HepG2 (cell line): ENCODE measurements at regions of chr2 and their contacts with region 1.

Region 1: DNA sequence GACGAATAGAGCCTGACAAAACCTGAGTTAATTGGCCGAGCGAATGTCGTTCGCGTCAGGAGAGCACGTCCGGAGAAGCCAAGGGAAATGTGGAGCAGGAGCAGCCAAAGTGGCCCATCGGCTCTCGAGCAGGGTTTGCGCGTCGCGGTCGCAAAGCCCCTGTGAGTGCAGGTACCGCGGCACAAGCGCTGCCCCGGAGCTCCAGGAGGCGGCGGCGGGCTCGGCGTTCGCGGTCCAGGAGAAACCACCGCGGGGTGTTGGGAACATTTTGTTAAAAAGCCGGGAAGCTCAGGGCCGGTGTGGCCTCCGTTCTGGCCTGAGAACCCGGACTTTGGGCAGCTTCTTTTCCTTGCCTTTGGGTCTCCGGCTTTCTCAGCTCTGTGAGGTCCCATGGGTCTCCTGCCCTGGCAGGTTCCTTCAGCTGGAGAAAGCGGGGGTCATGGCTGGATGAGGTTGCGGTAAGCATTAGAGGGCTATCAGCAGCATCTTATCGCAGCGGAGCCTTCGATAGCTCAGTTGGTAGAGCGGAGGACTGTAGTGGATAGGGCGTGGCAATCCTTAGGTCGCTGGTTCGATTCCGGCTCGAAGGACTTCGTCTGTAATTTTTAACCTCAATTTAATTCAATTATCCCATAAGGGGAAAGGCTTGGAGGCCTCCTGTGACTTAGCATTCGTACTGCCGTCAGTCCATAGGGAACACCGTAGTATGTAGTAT is 1.0 kb upstream of the AGBL5 start:
- DNase-seq: peak; percentile 93
- ATAC-seq: peak; percentile 75
- H3K4me3 ChIP-seq: peak overlapping the region; percentile 86 to 97 (median 91)
- H3K27ac ChIP-seq: peak overlapping the region; percentile 81
- H3K4me1 ChIP-seq: peaks cover 24% of the 10 kb centered on the region
- H3K27me3 ChIP-seq: no peaks in the 10 kb centered on the region; a peak in 1 of 5 replicates
- CTCF ChIP-seq: peak; percentile 49
- EP300 ChIP-seq: no peak
- POLR2A ChIP-seq: peak; percentile 86 to 98
- RAD21 ChIP-seq: peak; percentile 48

Region 2: GRCh38 chr2:27032495-27033252 is 17.8 kb before region 1 on chr2 and contains the start of gene TMEM214:
- CTCF ChIA-PET with region 1: no interaction called
- POLR2A ChIA-PET with region 1: interaction called, 59 read pairs
- in situ Hi-C with region 1: no loop called
- intact Hi-C with region 1: loop called (anchors 1 kb)
- DNase-seq: peak; percentile 85
- ATAC-seq: peak; percentile 97
- H3K4me3 ChIP-seq: peak within 1 kb of the TSS; percentile 82 to 97 (median 97)
- H3K27ac ChIP-seq: peak within 1 kb of the TSS; percentile 72
- H3K4me1 ChIP-seq: peaks cover 59% of the 10 kb centered on the region
- H3K27me3 ChIP-seq: no peaks in the 10 kb centered on the region; a peak in 1 of 5 replicates
- CTCF ChIP-seq: peak; percentile 6; the same call in 1 of the 2 replicates
- EP300 ChIP-seq: peak in 1 of 2 experiments; percentile 4; a peak in 1 of 4 replicates
- POLR2A ChIP-seq: peak; percentile 92 to 95
- RAD21 ChIP-seq: peak; percentile 52; the same call in 1 of the 2 replicates
- total RNA-seq, gene TMEM214: 28.0 and 58.3 TPM in 2 replicates

Region 3: GRCh38 chr2:27071277-27071989 is 21.0 kb after region 1 on chr2 and contains the start of gene OST4:
- CTCF ChIA-PET with region 1: no interaction called
- POLR2A ChIA-PET with region 1: interaction called, 100 read pairs
- in situ Hi-C with region 1: no loop called
- intact Hi-C with region 1: loop called (anchors 1 kb)
- DNase-seq: peak; percentile 88
- ATAC-seq: peak; percentile 88
- H3K4me3 ChIP-seq: peak within 1 kb of the TSS; percentile 92 to 99 (median 98)
- H3K27ac ChIP-seq: peak within 1 kb of the TSS; percentile 72
- H3K4me1 ChIP-seq: peaks cover 70% of the 10 kb centered on the region
- H3K27me3 ChIP-seq: peaks cover 0 to 16% of the 10 kb centered on the region in 2 experiments; a peak in 2 of 5 replicates
- CTCF ChIP-seq: peak; percentile 36
- EP300 ChIP-seq: peak in 1 of 2 experiments; percentile 45; a peak in 1 of 4 replicates
- POLR2A ChIP-seq: peak; percentile 93 to 97
- RAD21 ChIP-seq: peak; percentile 52
- total RNA-seq, gene OST4: 498 and 508 TPM in 2 replicates

Region 4: GRCh38 chr2:27078267-27079194 is 28.1 kb after region 1 on chr2 and contains the start of gene EMILIN1:
- CTCF ChIA-PET with region 1: no interaction called
- POLR2A ChIA-PET with region 1: interaction called, 58 read pairs
- in situ Hi-C with region 1: no loop called
- intact Hi-C with region 1: loop called (anchors 2 kb)
- DNase-seq: no peak
- ATAC-seq: peak; percentile 35
- H3K4me3 ChIP-seq: peak within 1 kb of the TSS; percentile 43 to 65 (median 57); a peak in 5 of 6 replicates
- H3K27ac ChIP-seq: peak within 1 kb of the TSS; percentile 32
- H3K4me1 ChIP-seq: peaks cover 85% of the 10 kb centered on the region
- H3K27me3 ChIP-seq: peaks cover 0 to 16% of the 10 kb centered on the region in 2 experiments; a peak in 2 of 5 replicates
- CTCF ChIP-seq: no peak
- EP300 ChIP-seq: no peak
- POLR2A ChIP-seq: no peak
- RAD21 ChIP-seq: no peak
- total RNA-seq, gene EMILIN1: 4.0 and 9.7 TPM in 2 replicates

Region 5: GRCh38 chr2:27211829-27212627 is 161.6 kb after region 1 on chr2 and contains the starts of genes ATRAID and SLC5A6:
- CTCF ChIA-PET with region 1: no interaction called
- POLR2A ChIA-PET with region 1: interaction called, 11 read pairs
- in situ Hi-C with region 1: no loop called
- intact Hi-C with region 1: no loop called
- DNase-seq: peak; percentile 82
- ATAC-seq: peak; percentile 91
- H3K4me3 ChIP-seq: peak within 1 kb of the TSS; percentile 87 to 93 (median 89)
- H3K27ac ChIP-seq: peak within 1 kb of the TSS; percentile 97
- H3K4me1 ChIP-seq: peaks cover 67% of the 10 kb centered on the region
- H3K27me3 ChIP-seq: no peaks in the 10 kb centered on the region; a peak in 1 of 5 replicates
- CTCF ChIP-seq: no peak; the same call in 1 of the 2 replicates
- EP300 ChIP-seq: peak in 1 of 2 experiments; percentile 11; a peak in 1 of 4 replicates
- POLR2A ChIP-seq: peak; percentile 95 to 98
- RAD21 ChIP-seq: peak; percentile 71
- total RNA-seq, gene ATRAID: 130 and 207 TPM in 2 replicates
- total RNA-seq, gene SLC5A6: 73.9 and 135 TPM in 2 replicates

Region 6: DNA sequence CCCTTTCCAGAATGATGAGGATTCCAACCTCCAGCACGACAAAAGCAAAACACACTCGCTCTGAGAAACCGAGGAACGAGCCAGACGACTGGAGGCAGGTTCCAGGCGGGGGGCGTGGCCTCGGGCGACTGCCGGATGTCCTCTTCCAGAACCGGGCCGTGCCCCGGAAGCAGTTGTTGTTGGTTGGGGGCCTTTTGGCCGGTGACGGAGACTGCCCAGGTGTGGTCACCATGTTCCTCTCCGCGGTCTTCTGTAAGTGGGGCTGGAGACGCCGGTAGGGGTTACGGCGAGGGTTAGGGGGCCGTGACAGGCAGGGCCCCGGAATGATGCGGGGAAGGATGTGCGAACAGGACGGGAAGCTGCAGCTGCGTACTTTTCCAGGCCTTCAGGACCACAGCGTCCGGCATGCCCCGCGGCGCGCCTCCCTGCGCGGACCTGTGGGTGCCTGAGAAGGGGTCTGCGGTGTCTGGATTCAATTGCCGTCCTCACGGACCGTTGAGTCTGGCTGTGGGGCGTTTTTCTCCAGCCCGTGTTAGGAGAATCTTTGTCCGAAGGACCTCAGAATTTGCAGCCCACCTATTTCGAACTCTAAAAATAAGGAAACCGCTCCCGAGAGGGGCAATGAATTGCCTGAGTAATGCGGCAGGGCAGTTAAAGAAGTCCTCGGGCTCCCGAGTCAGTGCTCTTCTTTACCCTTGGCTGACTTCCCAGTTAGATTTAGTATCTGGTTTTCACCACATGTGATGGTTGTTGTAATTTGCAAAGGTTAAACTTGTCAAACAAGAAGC is 721.3 kb after region 1 on chr2 and contains the start of gene MRPL33:
- CTCF ChIA-PET with region 1: no interaction called
- POLR2A ChIA-PET with region 1: no interaction called
- in situ Hi-C with region 1: no loop called
- intact Hi-C with region 1: no loop called
- DNase-seq: peak; percentile 93
- ATAC-seq: peak; percentile 97
- H3K4me3 ChIP-seq: peak within 1 kb of the TSS; percentile 93 to 98 (median 94)
- H3K27ac ChIP-seq: peak within 1 kb of the TSS; percentile 85
- H3K4me1 ChIP-seq: peaks cover 39% of the 10 kb centered on the region
- H3K27me3 ChIP-seq: no peaks in the 10 kb centered on the region; a peak in 1 of 5 replicates
- CTCF ChIP-seq: peak; percentile 33
- EP300 ChIP-seq: peak in 1 of 2 experiments; percentile 54; a peak in 1 of 4 replicates
- POLR2A ChIP-seq: peak; percentile 91 to 92
- RAD21 ChIP-seq: peak; percentile 35; the same call in 1 of the 2 replicates
- total RNA-seq, gene MRPL33: 218 and 227 TPM in 2 replicates